Mammary epithelial cell (primary cell): ENCODE measurements at regions of chr14 and their contacts with region 1.

Region 1: GRCh38 chr14:77353469-77354141 is 23.3 kb downstream of the TMED8 start:
- DNase-seq: no peak
- H3K4me3 ChIP-seq: no peak overlapping the region
- H3K27ac ChIP-seq: no peak overlapping the region
- H3K4me1 ChIP-seq: no peaks in the 10 kb centered on the region
- H3K27me3 ChIP-seq: no peaks in the 10 kb centered on the region
- CTCF ChIP-seq: no peak

Region 2: DNA sequence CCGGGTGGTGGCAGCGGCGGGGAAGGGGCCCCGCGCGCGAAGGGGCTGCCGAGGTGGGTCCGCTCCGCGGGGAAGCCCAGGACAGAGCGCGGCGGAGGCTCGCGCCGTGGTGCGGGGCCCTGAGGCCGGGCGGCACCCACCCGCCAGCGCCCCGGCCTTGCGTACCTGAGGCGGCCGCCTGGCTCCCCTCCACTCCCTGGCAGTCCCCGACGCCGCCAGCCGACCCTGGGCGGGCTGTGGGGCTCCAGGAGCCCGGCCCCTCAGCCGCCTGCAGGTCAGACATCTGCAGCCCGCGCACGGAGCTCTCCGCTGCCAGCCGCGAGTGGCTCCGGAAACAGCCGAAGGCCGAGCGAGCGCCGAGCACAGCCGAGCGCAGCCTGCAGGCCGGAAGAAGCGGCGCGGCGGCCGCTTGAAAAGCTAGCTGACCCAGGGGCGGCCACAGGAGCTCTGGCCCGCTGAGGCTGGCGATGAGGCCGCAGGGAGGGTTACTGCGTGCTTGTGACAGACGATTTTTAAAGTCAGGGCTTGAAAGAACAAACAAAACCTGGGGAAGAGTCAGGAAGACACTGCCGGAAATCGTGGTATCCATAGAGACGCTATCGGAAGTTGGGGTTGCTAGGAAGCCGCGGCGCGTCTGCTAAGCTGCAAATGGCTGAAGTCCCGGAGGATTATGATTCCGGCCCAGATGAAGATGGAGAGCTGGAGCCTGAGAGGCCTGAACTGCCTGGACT is 23.3 kb after region 1 on chr14 and contains the starts of genes SAMD15 and TMED8:
- CTCF ChIA-PET with region 1: no interaction called
- dilution Hi-C with region 1: no loop called
- in situ Hi-C with region 1: no loop called
- intact Hi-C with region 1: no loop called
- DNase-seq: peak; percentile 82
- H3K4me3 ChIP-seq: peak within 1 kb of the TSS; percentile 79 to 90 (median 85)
- H3K27ac ChIP-seq: peak within 1 kb of the TSS; percentile 81
- H3K4me1 ChIP-seq: peaks cover 16% of the 10 kb centered on the region
- H3K27me3 ChIP-seq: no peaks in the 10 kb centered on the region
- CTCF ChIP-seq: peak in 1 of 2 donors; percentile 35
- total RNA-seq, gene SAMD15: 1.2 to 2.5 TPM
- total RNA-seq, gene TMED8: 11.2 to 16.0 TPM

Region 3: GRCh38 chr14:77409131-77409533 is 55.5 kb after region 1 on chr14:
- CTCF ChIA-PET with region 1: no interaction called
- dilution Hi-C with region 1: loop called (anchors 5 kb)
- in situ Hi-C with region 1: no loop called
- intact Hi-C with region 1: no loop called
- DNase-seq: peak; percentile 18
- H3K4me3 ChIP-seq: no peak overlapping the region
- H3K27ac ChIP-seq: no peak overlapping the region
- H3K4me1 ChIP-seq: no peaks in the 10 kb centered on the region
- H3K27me3 ChIP-seq: no peaks in the 10 kb centered on the region
- CTCF ChIP-seq: peak in 1 of 2 donors; percentile 39

Region 4: GRCh38 chr14:77707724-77708408 is 354.3 kb after region 1 on chr14 and contains the starts of genes ALKBH1 and SLIRP:
- CTCF ChIA-PET with region 1: no interaction called
- dilution Hi-C with region 1: no loop called
- in situ Hi-C with region 1: no loop called
- intact Hi-C with region 1: no loop called
- DNase-seq: peak; percentile 82
- H3K4me3 ChIP-seq: peak within 1 kb of the TSS; percentile 77 to 99 (median 92)
- H3K27ac ChIP-seq: peak within 1 kb of the TSS; percentile 64
- H3K4me1 ChIP-seq: peaks cover 14% of the 10 kb centered on the region
- H3K27me3 ChIP-seq: no peaks in the 10 kb centered on the region
- CTCF ChIP-seq: no peak
- total RNA-seq, gene ALKBH1: 8.0 to 14.7 TPM
- total RNA-seq, gene SLIRP: 51.7 to 161 TPM